GM10248 (cell line): ENCODE measurements at regions of chr12 and their contacts with region 1.

Region 1: DNA sequence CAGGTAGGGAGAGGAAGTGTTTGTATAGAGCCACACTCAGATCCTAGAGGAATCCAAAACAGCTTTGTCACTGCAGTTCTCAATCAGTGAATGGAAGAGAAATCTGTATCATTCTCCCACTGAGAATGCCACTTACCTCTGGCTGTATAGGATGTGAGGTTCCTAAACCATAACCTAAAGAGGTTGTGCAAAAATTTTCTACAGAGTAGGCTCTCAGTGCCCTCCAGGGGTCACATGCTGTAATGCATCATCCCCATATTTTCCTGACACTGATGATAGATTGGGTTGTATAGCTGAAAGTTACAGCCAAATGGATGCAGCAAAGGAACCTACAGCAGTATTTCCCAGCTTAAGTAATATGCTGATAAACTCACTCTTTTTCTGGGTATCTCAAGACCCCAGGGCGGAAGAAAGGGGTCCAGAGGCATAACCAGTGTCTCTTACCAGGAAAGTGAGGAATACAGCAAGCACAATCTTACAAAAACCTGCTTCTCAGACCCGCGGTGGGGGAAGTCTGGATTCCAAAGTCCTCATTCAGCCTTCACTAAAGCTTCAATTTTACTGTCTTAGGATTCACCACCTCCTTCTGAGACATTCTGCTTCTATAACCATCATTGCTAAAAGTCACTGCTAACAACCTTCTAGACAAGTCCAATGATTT is 3.8 kb downstream of the BCDIN3D start:
- DNase-seq: peak; percentile 52
- CTCF ChIP-seq: peak; percentile 72

Region 2: GRCh38 chr12:49750027-49750995 is 88.8 kb before region 1 on chr12:
- CTCF ChIA-PET with region 1: interaction called, 10 read pairs
- POLR2A ChIA-PET with region 1: interaction called, 3 read pairs
- DNase-seq: no peak
- CTCF ChIP-seq: peak; percentile 21

Region 3: DNA sequence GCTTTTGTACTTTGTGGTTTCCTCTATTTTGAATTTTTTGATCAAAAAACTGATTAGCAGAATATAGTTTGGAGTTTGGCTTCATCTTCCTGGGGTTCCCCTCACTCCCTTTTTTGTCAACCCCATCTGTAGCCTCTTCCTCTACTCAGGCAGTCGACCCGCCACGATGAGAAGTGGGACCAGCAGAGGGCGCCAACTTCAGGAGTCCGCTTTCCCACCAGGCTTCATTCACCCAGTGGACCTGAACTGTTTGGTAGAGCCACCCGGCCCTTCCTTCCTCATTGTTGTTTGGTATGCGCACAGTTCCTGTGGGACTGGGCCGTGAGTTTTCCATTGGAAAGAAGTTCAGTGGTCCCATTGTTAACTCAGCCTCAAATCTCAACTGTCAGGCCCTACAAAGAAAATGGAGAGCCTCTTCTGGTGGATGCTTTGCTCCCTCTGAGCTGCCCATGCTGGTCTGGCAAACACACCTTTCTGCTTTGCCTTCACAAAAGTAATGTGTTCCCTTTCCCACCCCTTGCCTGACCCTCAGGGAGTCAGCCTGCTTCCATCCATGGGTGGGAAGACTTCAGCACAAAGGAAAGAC is 76.0 kb before region 1 on chr12:
- CTCF ChIA-PET with region 1: interaction called, 81 read pairs
- POLR2A ChIA-PET with region 1: no interaction called
- DNase-seq: peak; percentile 78
- CTCF ChIP-seq: peak; percentile 85

Region 4: DNA sequence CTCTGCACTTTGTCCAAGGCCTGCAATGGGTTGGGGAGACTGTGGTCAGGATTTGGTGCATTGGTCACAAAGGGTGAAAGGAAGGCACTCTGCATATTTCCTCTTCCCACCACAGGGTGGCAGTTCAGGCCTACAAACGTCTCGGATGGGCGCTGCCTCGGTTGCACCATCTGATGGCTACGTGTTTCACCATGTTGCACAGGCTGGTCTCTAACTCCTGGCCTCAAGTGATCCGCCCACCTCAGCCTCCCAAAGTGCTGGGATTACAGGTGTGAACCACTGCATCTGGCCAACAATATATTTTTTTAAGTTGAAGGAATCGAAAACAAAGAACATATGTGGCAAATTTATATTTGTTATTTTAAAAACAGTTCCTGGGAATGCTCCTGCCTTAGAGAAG is 62.7 kb before region 1 on chr12:
- CTCF ChIA-PET with region 1: interaction called, 33 read pairs
- POLR2A ChIA-PET with region 1: no interaction called
- DNase-seq: peak; percentile 78
- CTCF ChIP-seq: peak; percentile 79

Region 5: GRCh38 chr12:49800421-49801140 is 38.5 kb before region 1 on chr12:
- CTCF ChIA-PET with region 1: interaction called, 12 read pairs
- POLR2A ChIA-PET with region 1: no interaction called
- DNase-seq: no peak
- CTCF ChIP-seq: no peak

Region 6: GRCh38 chr12:49828133-49829091 is 10.7 kb before region 1 on chr12 and contains the start of gene NCKAP5L:
- CTCF ChIA-PET with region 1: interaction called, 55 read pairs
- POLR2A ChIA-PET with region 1: interaction called, 8 read pairs
- DNase-seq: peak; percentile 99
- CTCF ChIP-seq: no peak